Dendritic cell treated with granulocyte-macrophage colony-stimulating factor and Interleukin-4, amounts not matched to agents 40 ng/mL and 50 ng/mL, for 4 days (primary cell): ENCODE measurements at regions of chr5 and their contacts with region 1.

Region 1: DNA sequence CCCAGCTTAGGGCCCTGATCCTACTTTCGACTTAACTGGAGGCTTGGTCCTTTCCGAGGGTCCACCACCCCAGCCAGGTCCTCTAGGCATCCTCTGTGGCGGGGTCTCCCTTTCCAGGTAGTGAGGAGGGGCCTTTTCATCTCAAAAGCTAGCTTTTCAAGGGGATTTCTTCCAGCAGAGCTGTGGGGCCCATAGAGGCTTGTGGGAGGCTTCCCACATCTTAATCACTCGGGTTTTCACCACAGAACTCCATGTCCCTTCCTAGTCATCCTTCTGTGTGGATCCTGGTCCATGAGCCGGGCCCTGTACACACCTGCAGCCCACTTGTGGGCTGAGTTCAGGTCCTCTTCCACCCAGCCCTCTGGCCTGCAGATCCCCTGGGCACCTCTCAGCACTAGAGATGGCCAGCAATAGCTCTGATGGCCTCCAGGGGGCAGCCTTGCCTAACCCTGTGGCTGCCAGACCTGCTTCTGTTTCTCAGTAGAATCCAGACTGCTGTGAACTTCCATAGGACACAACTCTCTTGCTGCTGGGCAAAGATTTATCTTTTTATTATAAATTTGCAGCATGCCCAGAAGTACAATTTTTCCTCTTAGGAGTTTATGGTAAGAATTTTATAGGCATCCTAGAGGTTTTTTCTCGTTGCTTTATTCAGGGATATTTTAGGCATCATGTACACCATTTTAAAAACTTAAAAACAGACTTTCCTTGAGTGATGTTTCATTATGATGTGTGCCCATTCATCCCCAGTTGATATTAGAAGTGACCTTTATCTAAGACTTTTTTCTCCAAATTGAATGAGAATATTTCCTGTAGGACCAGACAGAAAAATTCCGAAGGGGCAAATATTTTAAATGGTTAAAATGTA is 208.9 kb downstream of the TRIO start:
- H3K4me3 Mint-ChIP-seq: peak overlapping the region; percentile 13
- H3K27ac Mint-ChIP-seq: peak overlapping the region; percentile 69
- H3K4me1 Mint-ChIP-seq: peaks cover 56% of the 10 kb centered on the region
- H3K27me3 Mint-ChIP-seq: no peaks in the 10 kb centered on the region

Region 2: GRCh38 chr5:14491015-14491915 is 139.2 kb after region 1 on chr5:
- intact Hi-C with region 1: no loop called
- H3K4me3 Mint-ChIP-seq: peak overlapping the region; percentile 4
- H3K27ac Mint-ChIP-seq: peak overlapping the region; percentile 84
- H3K4me1 Mint-ChIP-seq: peaks cover 65% of the 10 kb centered on the region
- H3K27me3 Mint-ChIP-seq: no peaks in the 10 kb centered on the region

Region 3: DNA sequence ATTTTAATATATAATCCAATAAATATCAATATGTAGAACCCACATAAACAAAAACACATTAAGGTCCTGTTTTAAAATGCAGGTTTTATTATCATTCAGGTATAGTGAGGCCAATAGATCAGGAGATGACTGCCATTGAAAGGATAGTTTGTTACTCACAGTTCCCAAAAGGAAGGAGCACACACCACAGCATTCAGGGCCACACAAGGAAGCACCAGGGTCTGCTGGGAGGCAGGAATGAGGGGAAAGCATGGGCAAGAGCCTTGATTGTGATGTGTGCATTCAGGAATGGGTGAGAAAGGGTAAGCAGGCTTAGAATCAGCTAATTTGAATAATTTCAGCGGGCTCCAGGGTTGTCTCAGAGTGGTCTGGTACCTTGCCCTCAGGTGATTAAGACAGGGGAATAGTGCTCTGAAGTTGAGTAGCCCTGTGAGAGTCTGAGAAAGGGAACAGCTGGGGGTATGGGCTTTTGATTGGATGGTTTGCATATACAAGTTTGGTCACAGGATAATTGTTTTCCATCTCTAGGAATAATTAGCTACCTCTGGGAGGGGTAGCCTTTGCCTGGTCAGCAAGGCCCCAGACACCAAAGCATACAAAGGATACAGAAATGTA is 292.7 kb after region 1 on chr5:
- intact Hi-C with region 1: loop called (anchors 2 kb)
- H3K4me3 Mint-ChIP-seq: no peak overlapping the region
- H3K27ac Mint-ChIP-seq: no peak overlapping the region
- H3K4me1 Mint-ChIP-seq: no peaks in the 10 kb centered on the region
- H3K27me3 Mint-ChIP-seq: no peaks in the 10 kb centered on the region